ENCODE measurements at regions of chrX and their contacts with region 1.

Region 1: DNA sequence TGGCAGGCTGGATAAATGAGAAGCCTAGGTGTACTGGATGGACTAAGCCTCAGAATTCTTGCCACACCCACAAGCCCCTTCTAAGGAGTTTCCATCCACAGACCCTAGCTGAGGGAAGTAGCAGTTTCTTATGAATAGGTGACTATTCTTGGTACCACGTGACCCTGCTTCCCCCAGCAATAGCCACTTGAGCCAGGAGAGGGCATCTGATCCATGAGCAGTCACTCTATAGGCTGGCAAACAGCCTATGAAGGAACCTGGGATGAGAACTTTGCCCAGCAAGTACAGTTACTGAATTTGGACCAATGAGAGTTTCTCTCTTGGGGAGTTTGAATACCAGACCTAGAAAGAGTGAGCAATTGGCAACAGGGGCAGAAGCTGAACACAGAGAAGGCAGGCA is 84.0 kb downstream of the RTL9 start:
- DNase-seq: peak; percentile 31
- CTCF ChIP-seq: peak; percentile 38

Region 2: GRCh38 chrX:110853610-110854009 is 411.0 kb after region 1 on chrX:
- in situ Hi-C with region 1: loop called (anchors 10 kb)
- DNase-seq: no peak
- CTCF ChIP-seq: no peak

Measured in GM13977 (cell line).